Naive thymus-derived CD4-positive, alpha-beta T cell (primary cell): ENCODE measurements at regions of chrX and their contacts with region 1.

Region 1: DNA sequence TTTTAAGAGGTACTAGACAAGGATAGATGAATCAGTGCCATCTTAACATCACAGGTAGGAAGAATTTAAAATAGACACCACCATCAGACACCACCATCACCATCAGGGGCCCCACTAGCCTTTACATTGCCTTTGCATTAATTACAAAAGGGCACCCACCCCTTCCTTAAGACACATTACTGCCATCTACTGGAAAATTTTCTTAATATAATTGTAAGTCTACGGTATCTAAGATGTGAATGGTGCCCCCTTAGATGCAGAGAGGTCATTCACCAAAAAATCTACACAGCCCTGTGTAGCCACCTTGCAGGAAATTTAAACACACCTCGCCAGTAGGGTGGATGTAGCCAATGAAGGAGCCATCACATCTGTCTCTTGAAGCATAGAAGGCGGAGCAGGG is 184.1 kb downstream of the MID1IP1 start:
- DNase-seq: peak in 6 of 9 donors; percentile 10 to 45 (median 25)
- ATAC-seq: peak; percentile 60
- H3K4me3 ChIP-seq: no peak overlapping the region
- H3K4me3 Mint-ChIP-seq: no peak overlapping the region
- H3K27ac ChIP-seq: no peak overlapping the region
- H3K27ac Mint-ChIP-seq: no peak overlapping the region
- H3K4me1 ChIP-seq: no peaks in the 10 kb centered on the region
- H3K4me1 Mint-ChIP-seq: peaks cover 0 to 7% (median 4%) of the 10 kb centered on the region in 7 donors
- H3K27me3 ChIP-seq: no peaks in the 10 kb centered on the region
- H3K27me3 Mint-ChIP-seq: no peaks in the 10 kb centered on the region

Region 2: DNA sequence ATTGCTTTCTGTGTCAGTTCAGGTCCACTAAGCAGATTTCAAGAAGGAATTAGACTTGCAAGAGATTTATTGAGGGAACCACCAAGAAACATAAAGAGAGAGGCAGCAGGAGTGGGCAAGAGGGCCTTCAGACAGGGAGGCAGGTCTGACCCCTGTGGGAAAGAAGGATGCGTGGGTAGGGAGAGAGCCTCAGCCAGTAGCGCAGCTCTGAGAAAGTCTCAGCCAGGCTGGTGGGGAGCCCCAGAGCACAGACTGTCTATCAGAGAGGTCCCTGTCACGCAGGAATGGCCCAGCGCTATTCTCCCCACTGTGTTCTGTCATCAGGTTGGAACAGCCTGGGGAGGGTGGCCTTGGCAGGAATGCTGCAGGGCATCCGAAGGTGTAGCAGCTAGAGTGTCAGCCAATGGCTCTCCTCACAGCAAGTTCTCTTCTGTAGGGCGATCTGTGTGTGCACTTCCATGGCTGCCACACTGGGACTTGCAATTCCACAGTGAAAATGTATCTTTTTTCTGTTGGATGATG is 584.9 kb before region 1 on chrX:
- CTCF ChIA-PET with region 1: no interaction called
- POLR2A ChIA-PET with region 1: no interaction called
- intact Hi-C with region 1: no loop called
- DNase-seq: no peak
- ATAC-seq: no peak
- H3K4me3 ChIP-seq: no peak overlapping the region
- H3K4me3 Mint-ChIP-seq: no peak overlapping the region
- H3K27ac ChIP-seq: no peak overlapping the region
- H3K27ac Mint-ChIP-seq: no peak overlapping the region
- H3K4me1 ChIP-seq: no peaks in the 10 kb centered on the region
- H3K4me1 Mint-ChIP-seq: no peaks in the 10 kb centered on the region
- H3K27me3 ChIP-seq: no peaks in the 10 kb centered on the region
- H3K27me3 Mint-ChIP-seq: peaks cover 0 to 3% (median 0%) of the 10 kb centered on the region in 5 donors

Region 3: DNA sequence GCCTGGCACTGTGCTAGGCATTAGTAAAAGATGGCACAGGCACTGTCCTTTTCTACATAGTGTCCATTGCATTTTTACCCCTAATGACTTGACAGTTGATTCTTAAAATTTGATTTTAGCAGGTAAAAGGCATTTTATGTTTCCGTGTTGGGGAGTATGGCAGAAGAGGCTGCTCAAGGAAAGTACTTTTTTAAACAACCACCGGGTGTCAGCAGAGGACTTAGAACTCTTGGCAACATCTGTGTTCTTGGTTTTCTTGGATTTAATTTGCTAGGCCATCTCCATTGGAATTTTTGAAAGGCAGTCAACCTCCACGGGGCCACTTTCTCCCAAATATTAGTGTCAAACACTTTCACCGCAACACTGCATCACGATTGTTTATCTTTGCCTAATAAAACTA is 321.1 kb before region 1 on chrX:
- CTCF ChIA-PET with region 1: no interaction called
- POLR2A ChIA-PET with region 1: no interaction called
- intact Hi-C with region 1: loop called in 1 of 2 experiments (anchors 10 kb)
- DNase-seq: peak in 1 of 9 donors; percentile 1
- ATAC-seq: no peak
- H3K4me3 ChIP-seq: no peak overlapping the region
- H3K4me3 Mint-ChIP-seq: no peak overlapping the region
- H3K27ac ChIP-seq: no peak overlapping the region
- H3K27ac Mint-ChIP-seq: no peak overlapping the region
- H3K4me1 ChIP-seq: no peaks in the 10 kb centered on the region
- H3K4me1 Mint-ChIP-seq: peaks cover 0 to under 1% (median under 1%) of the 10 kb centered on the region in 7 donors
- H3K27me3 ChIP-seq: no peaks in the 10 kb centered on the region
- H3K27me3 Mint-ChIP-seq: no peaks in the 10 kb centered on the region

Region 4: GRCh38 chrX:38717871-38718270 is 267.5 kb before region 1 on chrX:
- CTCF ChIA-PET with region 1: no interaction called
- POLR2A ChIA-PET with region 1: no interaction called
- intact Hi-C with region 1: loop called in 1 of 2 experiments (anchors 1 kb)
- DNase-seq: no peak
- ATAC-seq: no peak
- H3K4me3 ChIP-seq: no peak overlapping the region
- H3K4me3 Mint-ChIP-seq: no peak overlapping the region
- H3K27ac ChIP-seq: no peak overlapping the region
- H3K27ac Mint-ChIP-seq: no peak overlapping the region
- H3K4me1 ChIP-seq: no peaks in the 10 kb centered on the region
- H3K4me1 Mint-ChIP-seq: peaks cover 0 to 13% (median 7%) of the 10 kb centered on the region in 7 donors
- H3K27me3 ChIP-seq: no peaks in the 10 kb centered on the region
- H3K27me3 Mint-ChIP-seq: peaks cover 0 to 9% (median 2%) of the 10 kb centered on the region in 5 donors

Region 5: DNA sequence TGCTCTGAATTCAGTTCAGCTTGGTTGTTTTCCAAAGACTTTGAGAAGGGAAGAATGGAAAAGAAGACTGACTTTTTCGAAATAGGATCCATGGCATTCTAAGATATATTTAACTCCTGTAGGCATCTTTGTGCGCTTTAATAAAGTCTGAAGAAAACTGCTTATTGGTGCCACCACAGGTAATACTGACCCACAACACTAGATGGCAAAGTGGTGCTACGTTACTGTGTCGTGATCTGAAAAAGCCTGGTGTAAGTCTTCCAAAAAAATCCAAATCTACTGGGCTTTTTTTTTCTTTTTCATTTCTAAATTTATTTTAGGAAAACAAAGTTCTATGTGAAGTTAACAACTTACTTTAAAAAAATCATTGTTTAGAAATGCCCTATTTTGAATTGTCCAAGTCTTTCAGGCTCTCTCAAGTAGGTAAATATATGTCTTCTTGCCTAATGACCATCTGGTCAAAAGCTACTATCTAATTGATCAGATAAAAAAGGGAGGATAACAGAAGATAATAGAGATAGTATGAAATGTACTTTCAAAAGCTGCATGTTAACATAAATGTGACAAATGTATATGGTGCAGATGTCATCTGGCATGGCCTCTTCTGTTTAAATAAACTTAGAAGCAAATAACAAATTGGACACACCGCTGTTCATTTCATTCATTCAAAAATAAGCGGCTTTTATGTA is 231.1 kb before region 1 on chrX:
- CTCF ChIA-PET with region 1: interaction called, 3 read pairs
- POLR2A ChIA-PET with region 1: no interaction called
- intact Hi-C with region 1: loop called (anchors 1 kb)
- DNase-seq: peak in 6 of 9 donors; percentile 1 to 40 (median 32)
- ATAC-seq: peak; percentile 65
- H3K4me3 ChIP-seq: no peak overlapping the region
- H3K4me3 Mint-ChIP-seq: no peak overlapping the region
- H3K27ac ChIP-seq: no peak overlapping the region
- H3K27ac Mint-ChIP-seq: no peak overlapping the region
- H3K4me1 ChIP-seq: no peaks in the 10 kb centered on the region
- H3K4me1 Mint-ChIP-seq: no peaks in the 10 kb centered on the region
- H3K27me3 ChIP-seq: no peaks in the 10 kb centered on the region
- H3K27me3 Mint-ChIP-seq: no peaks in the 10 kb centered on the region

Region 6: DNA sequence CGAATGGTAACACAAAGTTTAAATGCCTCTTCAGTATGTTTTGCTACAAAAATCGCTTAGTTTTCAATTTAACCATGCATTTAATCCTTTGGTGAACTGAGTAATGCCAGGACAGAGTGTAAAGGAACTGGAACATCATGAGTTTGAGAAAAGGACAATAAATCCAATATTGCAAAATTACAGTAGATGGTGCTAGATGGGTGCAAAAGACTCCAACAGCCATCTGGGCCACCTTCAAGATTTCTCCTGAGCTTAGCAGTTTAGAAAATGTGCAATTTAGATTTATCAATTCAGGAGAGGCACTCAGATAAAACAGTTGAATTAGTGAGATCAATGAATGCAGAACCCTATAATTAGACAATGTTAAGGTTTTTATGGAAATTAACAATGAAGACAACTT is 217.3 kb before region 1 on chrX:
- CTCF ChIA-PET with region 1: interaction called, 9 read pairs
- POLR2A ChIA-PET with region 1: no interaction called
- intact Hi-C with region 1: loop called (anchors 1 kb)
- DNase-seq: peak in 5 of 9 donors; percentile 8 to 40 (median 19)
- ATAC-seq: no peak
- H3K4me3 ChIP-seq: no peak overlapping the region
- H3K4me3 Mint-ChIP-seq: no peak overlapping the region
- H3K27ac ChIP-seq: no peak overlapping the region
- H3K27ac Mint-ChIP-seq: no peak overlapping the region
- H3K4me1 ChIP-seq: no peaks in the 10 kb centered on the region
- H3K4me1 Mint-ChIP-seq: no peaks in the 10 kb centered on the region
- H3K27me3 ChIP-seq: no peaks in the 10 kb centered on the region
- H3K27me3 Mint-ChIP-seq: peaks cover 0 to 4% (median 0%) of the 10 kb centered on the region in 5 donors

Region 7: GRCh38 chrX:38960137-38960536 is 25.2 kb before region 1 on chrX:
- CTCF ChIA-PET with region 1: no interaction called
- POLR2A ChIA-PET with region 1: no interaction called
- intact Hi-C with region 1: no loop called
- DNase-seq: no peak
- ATAC-seq: no peak
- H3K4me3 ChIP-seq: no peak overlapping the region
- H3K4me3 Mint-ChIP-seq: no peak overlapping the region
- H3K27ac ChIP-seq: no peak overlapping the region
- H3K27ac Mint-ChIP-seq: no peak overlapping the region
- H3K4me1 ChIP-seq: no peaks in the 10 kb centered on the region
- H3K4me1 Mint-ChIP-seq: no peaks in the 10 kb centered on the region
- H3K27me3 ChIP-seq: no peaks in the 10 kb centered on the region
- H3K27me3 Mint-ChIP-seq: no peaks in the 10 kb centered on the region

Region 8: DNA sequence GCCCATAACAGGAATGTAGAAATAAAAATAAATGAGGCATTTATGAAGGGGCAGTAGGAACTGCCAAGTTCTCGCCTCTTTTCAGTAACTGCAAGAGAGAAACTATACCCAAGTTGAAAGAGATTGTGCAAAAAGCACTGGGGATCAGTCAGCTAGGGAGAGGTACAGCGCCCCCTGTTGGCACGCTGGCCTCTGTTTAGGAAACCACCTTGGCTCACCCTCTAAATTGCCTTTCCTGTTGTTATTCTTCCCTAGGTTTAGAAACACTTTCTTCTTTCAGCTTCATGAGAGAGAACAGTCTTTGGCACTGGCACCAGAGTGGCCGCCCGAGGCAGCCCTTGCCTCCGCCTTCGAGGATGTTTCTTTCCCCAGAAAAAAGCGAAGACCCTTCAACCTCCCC is 164.4 kb after region 1 on chrX:
- CTCF ChIA-PET with region 1: no interaction called
- POLR2A ChIA-PET with region 1: no interaction called
- intact Hi-C with region 1: loop called in 1 of 2 experiments (anchors 2 kb)
- DNase-seq: peak; percentile 14 to 59 (median 46)
- ATAC-seq: peak; percentile 61
- H3K4me3 ChIP-seq: no peak overlapping the region
- H3K4me3 Mint-ChIP-seq: no peak overlapping the region
- H3K27ac ChIP-seq: no peak overlapping the region
- H3K27ac Mint-ChIP-seq: no peak overlapping the region
- H3K4me1 ChIP-seq: no peaks in the 10 kb centered on the region
- H3K4me1 Mint-ChIP-seq: no peaks in the 10 kb centered on the region
- H3K27me3 ChIP-seq: no peaks in the 10 kb centered on the region
- H3K27me3 Mint-ChIP-seq: no peaks in the 10 kb centered on the region

Region 9: DNA sequence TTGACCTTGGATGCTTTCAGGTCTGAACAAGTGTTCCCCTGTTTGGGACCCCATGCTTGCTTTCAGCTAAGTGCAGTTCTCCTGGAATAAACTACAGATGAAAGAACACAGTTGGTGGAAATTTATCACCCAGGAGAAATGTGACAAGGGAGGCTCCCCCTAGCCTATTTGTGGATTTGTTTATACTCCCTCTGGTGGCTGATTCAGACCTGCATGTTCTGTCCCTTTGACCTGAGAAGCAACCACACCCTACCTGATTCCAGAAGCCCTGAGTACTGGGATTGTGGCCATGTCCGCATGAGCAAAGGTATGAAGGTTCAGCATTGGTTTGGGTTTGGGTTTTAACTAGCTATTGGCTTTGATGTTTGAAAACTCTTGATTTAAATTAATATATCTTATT is 256.8 kb after region 1 on chrX:
- CTCF ChIA-PET with region 1: no interaction called
- POLR2A ChIA-PET with region 1: no interaction called
- intact Hi-C with region 1: loop called in 1 of 2 experiments (anchors 1 kb)
- DNase-seq: peak in 6 of 9 donors; percentile 7 to 31 (median 16)
- ATAC-seq: no peak
- H3K4me3 ChIP-seq: no peak overlapping the region
- H3K4me3 Mint-ChIP-seq: no peak overlapping the region
- H3K27ac ChIP-seq: no peak overlapping the region
- H3K27ac Mint-ChIP-seq: no peak overlapping the region
- H3K4me1 ChIP-seq: no peaks in the 10 kb centered on the region
- H3K4me1 Mint-ChIP-seq: peaks cover 0 to 14% (median 0%) of the 10 kb centered on the region in 7 donors
- H3K27me3 ChIP-seq: no peaks in the 10 kb centered on the region
- H3K27me3 Mint-ChIP-seq: no peaks in the 10 kb centered on the region